ENCODE measurements at regions of chr2 and their contacts with region 1.

Region 1: GRCh38 chr2:173990970-173991819 is 26.0 kb upstream of the SP3 start:
- DNase-seq: peak; percentile 79 to 90 (median 82)
- ATAC-seq: peak; percentile 64 to 85 (median 78)
- H3K4me3 ChIP-seq: peak overlapping the region in 5 of 12 donors; percentile 2 to 8 (median 4)
- H3K27ac ChIP-seq: peak overlapping the region; percentile 25 to 85 (median 68)
- H3K4me1 ChIP-seq: peaks cover 0 to 74% (median 43%) of the 10 kb centered on the region in 12 donors
- H3K27me3 ChIP-seq: no peaks in the 10 kb centered on the region
- CTCF ChIP-seq: no peak
- POLR2A ChIP-seq: no peak

Region 2: DNA sequence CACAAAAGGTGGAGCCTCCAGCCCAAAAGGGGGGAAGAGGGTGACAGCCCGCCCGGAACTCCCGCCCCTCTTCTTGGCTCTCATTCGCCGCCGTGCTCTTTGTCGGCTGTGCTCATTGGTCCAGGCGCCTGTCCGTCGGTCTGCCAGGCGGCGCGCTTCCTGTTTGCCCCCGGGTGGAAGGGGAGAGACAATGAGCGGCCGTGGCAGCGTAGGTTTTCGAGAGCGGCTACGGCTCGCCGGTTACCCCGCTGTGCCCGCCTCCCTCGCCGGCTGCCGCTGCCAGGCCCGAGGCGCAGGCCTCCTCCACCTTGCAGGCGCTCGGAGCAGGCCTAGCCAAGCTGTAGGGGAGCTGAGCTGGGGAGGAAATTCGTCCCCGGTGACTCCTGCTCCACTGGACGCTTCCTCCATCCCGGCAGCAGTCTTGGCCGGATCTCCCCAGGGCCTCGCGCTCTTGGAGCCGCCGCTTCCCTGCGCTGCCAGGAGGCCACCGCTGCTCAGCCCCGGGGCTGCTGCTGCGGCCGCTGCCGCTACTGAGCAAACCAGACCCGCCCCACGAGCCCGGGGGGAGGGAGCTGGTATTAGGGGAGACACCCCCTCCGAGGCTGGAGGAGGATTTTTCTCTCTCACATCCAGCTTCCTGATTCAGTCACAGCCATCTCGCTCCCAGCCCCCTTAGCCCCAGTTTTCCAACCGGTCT is 25.7 kb before region 1 on chr2 and contains the start of gene SP3:
- intact Hi-C with region 1: loop called in 2 of 10 experiments (anchors 1 to 5 kb)
- DNase-seq: peak; percentile 99
- ATAC-seq: peak; percentile 90 to 95 (median 92)
- H3K4me3 ChIP-seq: peak within 1 kb of the TSS; percentile 72 to 100 (median 96)
- H3K27ac ChIP-seq: peak within 1 kb of the TSS; percentile 97 to 100 (median 100)
- H3K4me1 ChIP-seq: peaks cover 0 to 40% (median 24%) of the 10 kb centered on the region in 12 donors
- H3K27me3 ChIP-seq: no peaks in the 10 kb centered on the region
- CTCF ChIP-seq: peak in 2 of 12 donors; percentile 7 to 19
- POLR2A ChIP-seq: peak; percentile 15 to 94
- total RNA-seq, gene SP3: 32.2 to 61.5 (median 42.0) TPM

Region 3: GRCh38 chr2:174023591-174024523 is 32.7 kb after region 1 on chr2:
- intact Hi-C with region 1: loop called in 3 of 10 experiments (anchors 2 to 5 kb)
- DNase-seq: peak in 4 of 5 donors; percentile 44 to 77 (median 60)
- ATAC-seq: peak; percentile 27 to 73 (median 68)
- H3K4me3 ChIP-seq: peak overlapping the region in 1 of 12 donors; percentile 8
- H3K27ac ChIP-seq: peak overlapping the region; percentile 60 to 93 (median 86)
- H3K4me1 ChIP-seq: peaks cover 5 to 75% (median 45%) of the 10 kb centered on the region in 12 donors
- H3K27me3 ChIP-seq: no peaks in the 10 kb centered on the region
- CTCF ChIP-seq: no peak
- POLR2A ChIP-seq: peak in 1 of 2 donors; percentile 17

Measured in heart left ventricle (tissue), 16 donors.